Natural killer cell (primary cell): ENCODE measurements at regions of chr19 and their contacts with region 1.

Region 1: GRCh38 chr19:1896508-1896907 is 8.7 kb upstream of the ADAT3 start:
- DNase-seq: peak in 1 of 2 donors; percentile 31
- ATAC-seq: no peak
- H3K4me3 ChIP-seq: no peak overlapping the region
- H3K4me3 Mint-ChIP-seq: peak overlapping the region; percentile 89
- H3K27ac ChIP-seq: peak overlapping the region; percentile 83
- H3K27ac Mint-ChIP-seq: peak overlapping the region; percentile 93 to 98
- H3K4me1 ChIP-seq: peaks cover 49% of the 10 kb centered on the region
- H3K4me1 Mint-ChIP-seq: peaks cover 12 to 30% of the 10 kb centered on the region in 2 donors
- H3K27me3 ChIP-seq: no peaks in the 10 kb centered on the region
- H3K27me3 Mint-ChIP-seq: no peaks in the 10 kb centered on the region
- CTCF ChIP-seq: no peak

Region 2: GRCh38 chr19:1863726-1864480 is 32.6 kb before region 1 on chr19:
- intact Hi-C with region 1: loop called (anchors 5 kb)
- DNase-seq: peak; percentile 90 to 96
- ATAC-seq: peak; percentile 73 to 90 (median 74)
- H3K4me3 ChIP-seq: peak overlapping the region; percentile 73
- H3K4me3 Mint-ChIP-seq: peak overlapping the region; percentile 78
- H3K27ac ChIP-seq: peak overlapping the region; percentile 67
- H3K27ac Mint-ChIP-seq: peak overlapping the region; percentile 46 to 77
- H3K4me1 ChIP-seq: peaks cover 47% of the 10 kb centered on the region
- H3K4me1 Mint-ChIP-seq: peaks cover 18 to 48% of the 10 kb centered on the region in 2 donors
- H3K27me3 ChIP-seq: no peaks in the 10 kb centered on the region
- H3K27me3 Mint-ChIP-seq: no peaks in the 10 kb centered on the region
- CTCF ChIP-seq: no peak

Region 3: GRCh38 chr19:1884719-1885334 is 11.7 kb before region 1 on chr19:
- intact Hi-C with region 1: loop called (anchors 1 kb)
- DNase-seq: peak in 1 of 2 donors; percentile 41
- ATAC-seq: peak in 2 of 3 donors; percentile 1 to 2
- H3K4me3 ChIP-seq: peak overlapping the region; percentile 99
- H3K4me3 Mint-ChIP-seq: peak overlapping the region; percentile 100
- H3K27ac ChIP-seq: peak overlapping the region; percentile 99
- H3K27ac Mint-ChIP-seq: peak overlapping the region; percentile 97 to 99
- H3K4me1 ChIP-seq: peaks cover 54% of the 10 kb centered on the region
- H3K4me1 Mint-ChIP-seq: peaks cover 40 to 43% of the 10 kb centered on the region in 2 donors
- H3K27me3 ChIP-seq: no peaks in the 10 kb centered on the region
- H3K27me3 Mint-ChIP-seq: no peaks in the 10 kb centered on the region
- CTCF ChIP-seq: no peak